ENCODE measurements at regions of chr20 and their contacts with region 1.

Region 1: GRCh38 chr20:58236612-58237330 is 8.3 kb upstream of the ANKRD60 start:
- DNase-seq: peak; percentile 66
- H3K4me3 ChIP-seq: peak overlapping the region; percentile 39 to 84 (median 83)
- H3K27ac ChIP-seq: peak overlapping the region; percentile 28
- H3K4me1 ChIP-seq: peaks cover 13% of the 10 kb centered on the region
- H3K27me3 ChIP-seq: no peaks in the 10 kb centered on the region
- CTCF ChIP-seq: peak; percentile 94 to 98
- POLR2A ChIP-seq: peak; percentile 16

Region 2: GRCh38 chr20:57317789-57318371 is 918.9 kb before region 1 on chr20:
- CTCF ChIA-PET with region 1: no interaction called
- POLR2A ChIA-PET with region 1: no interaction called
- dilution Hi-C with region 1: no loop called
- intact Hi-C with region 1: no loop called
- DNase-seq: no peak
- H3K4me3 ChIP-seq: no peak overlapping the region
- H3K27ac ChIP-seq: no peak overlapping the region
- H3K4me1 ChIP-seq: no peaks in the 10 kb centered on the region
- H3K27me3 ChIP-seq: no peaks in the 10 kb centered on the region
- CTCF ChIP-seq: no peak
- POLR2A ChIP-seq: no peak

Region 3: GRCh38 chr20:58160451-58161061 is 76.2 kb before region 1 on chr20:
- CTCF ChIA-PET with region 1: no interaction called
- POLR2A ChIA-PET with region 1: no interaction called
- dilution Hi-C with region 1: no loop called
- intact Hi-C with region 1: no loop called
- DNase-seq: no peak
- H3K4me3 ChIP-seq: no peak overlapping the region
- H3K27ac ChIP-seq: no peak overlapping the region
- H3K4me1 ChIP-seq: no peaks in the 10 kb centered on the region
- H3K27me3 ChIP-seq: no peaks in the 10 kb centered on the region
- CTCF ChIP-seq: no peak
- POLR2A ChIP-seq: no peak

Region 4: DNA sequence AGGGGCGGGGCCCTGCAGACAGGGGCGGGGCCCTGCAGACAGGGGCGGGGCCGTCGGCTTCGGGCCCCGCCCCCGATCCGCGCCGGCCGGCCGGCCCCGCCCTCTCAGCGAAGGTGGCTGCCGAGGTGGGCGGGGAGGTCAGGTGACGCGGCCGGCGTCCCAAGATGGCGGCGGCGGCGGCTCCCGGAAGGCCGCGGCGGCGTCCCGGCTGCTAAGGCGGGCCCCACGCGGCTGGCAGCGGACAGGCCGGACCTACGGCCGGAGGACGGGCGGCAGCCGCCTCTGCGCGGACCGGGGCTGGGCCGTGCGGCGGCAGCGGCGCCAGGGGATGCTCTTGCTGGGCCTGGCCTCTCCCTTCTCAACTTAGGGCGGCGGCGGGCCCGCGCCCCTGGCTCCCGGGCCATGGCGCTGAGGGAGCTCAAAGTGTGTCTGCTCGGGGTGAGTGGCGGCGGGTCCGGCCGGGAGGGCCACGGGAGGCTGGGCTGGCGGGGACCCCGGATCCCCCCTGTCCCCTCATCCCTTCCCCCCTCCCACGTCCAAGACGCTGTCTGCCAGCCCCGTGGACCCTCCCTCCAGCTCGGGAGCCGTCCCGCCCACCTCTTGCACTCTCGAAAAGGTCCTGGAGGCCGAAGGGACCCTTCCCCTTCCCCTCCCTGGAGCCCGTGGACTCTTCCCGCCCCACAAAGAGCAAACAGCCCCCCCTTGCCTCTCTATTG is 73.0 kb after region 1 on chr20 and contains the start of gene RAB22A:
- CTCF ChIA-PET with region 1: interaction called, 3 read pairs
- POLR2A ChIA-PET with region 1: no interaction called
- dilution Hi-C with region 1: no loop called
- intact Hi-C with region 1: loop called (anchors 1 kb)
- DNase-seq: peak; percentile 66
- H3K4me3 ChIP-seq: peak within 1 kb of the TSS; percentile 96 to 99 (median 98)
- H3K27ac ChIP-seq: peak within 1 kb of the TSS; percentile 85
- H3K4me1 ChIP-seq: peaks cover 10% of the 10 kb centered on the region
- H3K27me3 ChIP-seq: no peaks in the 10 kb centered on the region
- CTCF ChIP-seq: no peak
- POLR2A ChIP-seq: peak; percentile 95
- total RNA-seq, gene RAB22A: 15.7 and 16.3 TPM in 2 replicates

Region 5: GRCh38 chr20:58447511-58448391 is 211.0 kb after region 1 on chr20:
- CTCF ChIA-PET with region 1: interaction called, 31 read pairs
- POLR2A ChIA-PET with region 1: no interaction called
- dilution Hi-C with region 1: loop called (anchors 25 kb)
- intact Hi-C with region 1: loop called (anchors 1 kb)
- DNase-seq: peak; percentile 66
- H3K4me3 ChIP-seq: no peak overlapping the region
- H3K27ac ChIP-seq: no peak overlapping the region
- H3K4me1 ChIP-seq: no peaks in the 10 kb centered on the region
- H3K27me3 ChIP-seq: no peaks in the 10 kb centered on the region
- CTCF ChIP-seq: peak; percentile 68 to 73
- POLR2A ChIP-seq: no peak

Region 6: GRCh38 chr20:58839474-58839874 is 602.7 kb after region 1 on chr20:
- CTCF ChIA-PET with region 1: no interaction called
- POLR2A ChIA-PET with region 1: no interaction called
- dilution Hi-C with region 1: loop called (anchors 25 kb)
- intact Hi-C with region 1: no loop called
- DNase-seq: peak; percentile 21
- H3K4me3 ChIP-seq: no peak overlapping the region
- H3K27ac ChIP-seq: no peak overlapping the region
- H3K4me1 ChIP-seq: no peaks in the 10 kb centered on the region
- H3K27me3 ChIP-seq: peaks cover 34 to 52% of the 10 kb centered on the region in 2 experiments
- CTCF ChIP-seq: peak; percentile 7 to 48
- POLR2A ChIP-seq: no peak

Region 7: GRCh38 chr20:59222253-59223181 is 985.7 kb after region 1 on chr20:
- CTCF ChIA-PET with region 1: no interaction called
- POLR2A ChIA-PET with region 1: no interaction called
- dilution Hi-C with region 1: no loop called
- intact Hi-C with region 1: loop called (anchors 10 kb)
- DNase-seq: peak; percentile 74
- H3K4me3 ChIP-seq: peak overlapping the region; percentile 42 to 71 (median 61)
- H3K27ac ChIP-seq: no peak overlapping the region
- H3K4me1 ChIP-seq: peaks cover 7% of the 10 kb centered on the region
- H3K27me3 ChIP-seq: peaks cover 20% of the 10 kb centered on the region in 2 experiments
- CTCF ChIP-seq: peak; percentile 96 to 97
- POLR2A ChIP-seq: no peak